Naive thymus-derived CD4-positive, alpha-beta T cell (primary cell): ENCODE measurements at regions of chr5 and their contacts with region 1.

Region 1: GRCh38 chr5:6745706-6746222 is 32.5 kb downstream of the TENT4A start:
- DNase-seq: peak in 7 of 9 donors; percentile 33 to 62 (median 53)
- ATAC-seq: peak; percentile 85
- H3K4me3 ChIP-seq: no peak overlapping the region
- H3K4me3 Mint-ChIP-seq: no peak overlapping the region
- H3K27ac ChIP-seq: no peak overlapping the region
- H3K27ac Mint-ChIP-seq: peak overlapping the region in 3 of 9 donors; percentile 4 to 48 (median 36)
- H3K4me1 ChIP-seq: no peaks in the 10 kb centered on the region
- H3K4me1 Mint-ChIP-seq: peaks cover 2 to 10% (median 6%) of the 10 kb centered on the region in 7 donors
- H3K27me3 ChIP-seq: no peaks in the 10 kb centered on the region
- H3K27me3 Mint-ChIP-seq: no peaks in the 10 kb centered on the region

Region 2: DNA sequence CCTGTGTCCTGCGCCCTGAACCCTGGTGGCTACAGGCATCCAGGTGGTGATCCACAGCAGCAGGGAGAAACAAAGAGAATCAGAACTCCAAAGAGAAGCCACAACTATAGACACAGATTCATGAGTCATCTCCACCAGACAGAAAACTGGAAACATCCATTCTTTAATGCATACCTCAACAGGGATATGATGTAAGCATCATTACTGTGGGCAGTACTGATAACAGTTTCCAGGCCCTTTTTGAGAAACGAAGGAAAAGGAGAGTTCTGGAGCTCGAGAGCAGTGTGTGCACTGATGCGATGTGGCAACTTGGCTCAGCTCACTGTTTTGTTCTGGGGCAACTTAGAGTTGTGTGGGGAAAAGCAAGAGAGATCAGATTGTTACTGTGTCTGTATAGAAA is 1821.2 kb before region 1 on chr5:
- CTCF ChIA-PET with region 1: no interaction called
- POLR2A ChIA-PET with region 1: no interaction called
- intact Hi-C with region 1: no loop called
- DNase-seq: no peak
- ATAC-seq: no peak
- H3K4me3 ChIP-seq: no peak overlapping the region
- H3K4me3 Mint-ChIP-seq: no peak overlapping the region
- H3K27ac ChIP-seq: no peak overlapping the region
- H3K27ac Mint-ChIP-seq: no peak overlapping the region
- H3K4me1 ChIP-seq: no peaks in the 10 kb centered on the region
- H3K4me1 Mint-ChIP-seq: no peaks in the 10 kb centered on the region
- H3K27me3 ChIP-seq: no peaks in the 10 kb centered on the region
- H3K27me3 Mint-ChIP-seq: no peaks in the 10 kb centered on the region

Region 3: GRCh38 chr5:5141625-5142532 is 1603.9 kb before region 1 on chr5:
- CTCF ChIA-PET with region 1: no interaction called
- POLR2A ChIA-PET with region 1: no interaction called
- intact Hi-C with region 1: loop called in 1 of 2 experiments (anchors 5 kb)
- DNase-seq: peak in 7 of 9 donors; percentile 3 to 55 (median 38)
- ATAC-seq: no peak
- H3K4me3 ChIP-seq: no peak overlapping the region
- H3K4me3 Mint-ChIP-seq: no peak overlapping the region
- H3K27ac ChIP-seq: no peak overlapping the region
- H3K27ac Mint-ChIP-seq: no peak overlapping the region
- H3K4me1 ChIP-seq: no peaks in the 10 kb centered on the region
- H3K4me1 Mint-ChIP-seq: peaks cover 0 to 14% (median 9%) of the 10 kb centered on the region in 7 donors
- H3K27me3 ChIP-seq: peaks cover 0 to 9% of the 10 kb centered on the region in 2 donors
- H3K27me3 Mint-ChIP-seq: peaks cover 21 to 35% (median 29%) of the 10 kb centered on the region in 5 donors

Region 4: GRCh38 chr5:6291961-6292360 is 453.8 kb before region 1 on chr5:
- CTCF ChIA-PET with region 1: no interaction called
- POLR2A ChIA-PET with region 1: no interaction called
- intact Hi-C with region 1: loop called (anchors 1 to 2 kb)
- DNase-seq: peak in 6 of 9 donors; percentile 17 to 49 (median 28)
- ATAC-seq: no peak
- H3K4me3 ChIP-seq: no peak overlapping the region
- H3K4me3 Mint-ChIP-seq: no peak overlapping the region
- H3K27ac ChIP-seq: no peak overlapping the region
- H3K27ac Mint-ChIP-seq: no peak overlapping the region
- H3K4me1 ChIP-seq: no peaks in the 10 kb centered on the region
- H3K4me1 Mint-ChIP-seq: no peaks in the 10 kb centered on the region
- H3K27me3 ChIP-seq: no peaks in the 10 kb centered on the region
- H3K27me3 Mint-ChIP-seq: peaks cover 0 to 20% (median 7%) of the 10 kb centered on the region in 5 donors

Region 5: GRCh38 chr5:6615034-6615815 is 130.5 kb before region 1 on chr5:
- CTCF ChIA-PET with region 1: interaction called, 3 read pairs
- POLR2A ChIA-PET with region 1: no interaction called
- intact Hi-C with region 1: loop called in 1 of 2 experiments (anchors 5 kb)
- DNase-seq: no peak
- ATAC-seq: no peak
- H3K4me3 ChIP-seq: no peak overlapping the region
- H3K4me3 Mint-ChIP-seq: no peak overlapping the region
- H3K27ac ChIP-seq: no peak overlapping the region
- H3K27ac Mint-ChIP-seq: peak overlapping the region in 2 of 9 donors; percentile 14 to 68
- H3K4me1 ChIP-seq: no peaks in the 10 kb centered on the region
- H3K4me1 Mint-ChIP-seq: peaks cover 10 to 54% (median 22%) of the 10 kb centered on the region in 7 donors
- H3K27me3 ChIP-seq: no peaks in the 10 kb centered on the region
- H3K27me3 Mint-ChIP-seq: no peaks in the 10 kb centered on the region